T-cell (primary cell): ENCODE measurements at regions of chr19 and their contacts with region 1.

Region 1: GRCh38 chr19:7943444-7944176 is at the start of gene TIMM44:
- DNase-seq: peak; percentile 92 to 99 (median 98)
- ATAC-seq: peak; percentile 95 to 98 (median 98)
- H3K4me3 ChIP-seq: peak within 1 kb of the TSS; percentile 90 to 92
- H3K4me3 Mint-ChIP-seq: peak within 1 kb of the TSS; percentile 87 to 90 (median 89)
- H3K27ac ChIP-seq: peak within 1 kb of the TSS; percentile 97
- H3K27ac Mint-ChIP-seq: peak within 1 kb of the TSS; percentile 90 to 95
- H3K4me1 ChIP-seq: peaks cover 7 to 32% of the 10 kb centered on the region in 2 experiments
- H3K4me1 Mint-ChIP-seq: peaks cover 32 to 46% (median 35%) of the 10 kb centered on the region in 3 donors
- H3K27me3 ChIP-seq: no peaks in the 10 kb centered on the region
- H3K27me3 Mint-ChIP-seq: no peaks in the 10 kb centered on the region
- total RNA-seq, gene TIMM44: 72.7 to 99.4 (median 90.3) TPM

Region 2: DNA sequence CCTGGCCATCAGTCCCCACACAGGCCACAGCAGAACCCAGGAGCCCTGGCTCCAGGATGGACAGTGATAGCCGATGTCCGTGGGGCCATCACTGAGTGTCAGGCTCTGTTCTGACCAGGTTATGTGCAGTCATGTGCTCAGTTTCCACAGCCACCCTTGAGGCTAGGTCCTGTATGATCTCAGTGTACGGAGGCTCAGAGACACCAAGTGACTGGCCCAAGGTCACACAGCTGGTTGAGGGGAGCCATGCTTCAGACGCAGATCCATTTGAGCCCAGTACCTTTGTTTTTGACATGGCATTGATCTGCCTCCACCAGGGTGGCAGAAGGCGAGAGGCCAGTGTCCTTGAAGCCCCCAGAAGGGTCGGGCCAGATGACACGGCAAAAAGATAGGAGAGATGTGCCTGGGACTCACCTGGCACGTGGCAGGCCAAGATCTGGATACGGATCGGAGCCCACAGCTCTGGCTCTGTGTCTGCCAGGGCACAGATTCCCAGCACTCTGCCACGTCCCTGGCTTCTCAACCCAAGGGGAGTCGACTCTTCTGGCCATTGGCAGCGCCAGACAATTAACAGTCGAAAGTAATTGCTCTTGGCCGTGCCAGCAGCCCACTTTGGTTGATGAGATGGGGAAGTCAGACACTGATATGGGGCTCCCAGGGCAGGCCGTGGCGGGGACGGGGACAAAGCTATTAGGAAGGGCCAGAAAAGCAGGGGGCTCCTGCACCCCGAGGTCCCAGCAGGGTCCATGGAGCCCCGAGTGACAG is 98.0 kb before region 1 on chr19:
- CTCF ChIA-PET with region 1: no interaction called
- POLR2A ChIA-PET with region 1: no interaction called
- DNase-seq: no peak
- ATAC-seq: no peak
- H3K4me3 ChIP-seq: no peak overlapping the region
- H3K4me3 Mint-ChIP-seq: no peak overlapping the region
- H3K27ac ChIP-seq: no peak overlapping the region
- H3K27ac Mint-ChIP-seq: no peak overlapping the region
- H3K4me1 ChIP-seq: no peaks in the 10 kb centered on the region
- H3K4me1 Mint-ChIP-seq: no peaks in the 10 kb centered on the region
- H3K27me3 ChIP-seq: no peaks in the 10 kb centered on the region
- H3K27me3 Mint-ChIP-seq: no peaks in the 10 kb centered on the region

Region 3: GRCh38 chr19:7868676-7869452 is 74.7 kb before region 1 on chr19:
- CTCF ChIA-PET with region 1: interaction called in 1 of 2 experiments, 18 read pairs
- POLR2A ChIA-PET with region 1: no interaction called
- DNase-seq: peak; percentile 70 to 96 (median 82)
- ATAC-seq: peak; percentile 74 to 85 (median 83)
- H3K4me3 ChIP-seq: peak overlapping the region; percentile 58 to 59
- H3K4me3 Mint-ChIP-seq: peak overlapping the region; percentile 75 to 80 (median 76)
- H3K27ac ChIP-seq: peak overlapping the region; percentile 76
- H3K27ac Mint-ChIP-seq: peak overlapping the region; percentile 23 to 88
- H3K4me1 ChIP-seq: peaks cover 3 to 65% of the 10 kb centered on the region in 2 experiments
- H3K4me1 Mint-ChIP-seq: peaks cover 35 to 48% (median 37%) of the 10 kb centered on the region in 3 donors
- H3K27me3 ChIP-seq: peaks cover 0 to 75% of the 10 kb centered on the region in 2 experiments
- H3K27me3 Mint-ChIP-seq: peaks cover 17 to 24% of the 10 kb centered on the region in 2 donors

Region 4: GRCh38 chr19:7919610-7920518 is 23.7 kb before region 1 on chr19 and contains the start of gene SNAPC2:
- CTCF ChIA-PET with region 1: interaction called, 3 to 33 read pairs
- POLR2A ChIA-PET with region 1: interaction called in 1 of 2 experiments, 12 read pairs
- DNase-seq: peak; percentile 91 to 98 (median 96)
- ATAC-seq: peak; percentile 69 to 71 (median 70)
- H3K4me3 ChIP-seq: peak within 1 kb of the TSS; percentile 57
- H3K4me3 Mint-ChIP-seq: peak within 1 kb of the TSS; percentile 86 to 94 (median 88)
- H3K27ac ChIP-seq: peak within 1 kb of the TSS; percentile 72
- H3K27ac Mint-ChIP-seq: peak within 1 kb of the TSS; percentile 91 to 94
- H3K4me1 ChIP-seq: peaks cover 17 to 68% of the 10 kb centered on the region in 2 experiments
- H3K4me1 Mint-ChIP-seq: peaks cover 29 to 53% (median 35%) of the 10 kb centered on the region in 3 donors
- H3K27me3 ChIP-seq: peaks cover 3 to 45% of the 10 kb centered on the region in 2 experiments
- H3K27me3 Mint-ChIP-seq: peaks cover 10 to 31% of the 10 kb centered on the region in 2 donors
- total RNA-seq, gene SNAPC2: 9.0 to 22.9 (median 18.6) TPM

Region 5: GRCh38 chr19:7928736-7929701 is 14.6 kb before region 1 on chr19:
- CTCF ChIA-PET with region 1: interaction called, 3 to 15 read pairs
- POLR2A ChIA-PET with region 1: interaction called in 1 of 2 experiments, 12 read pairs
- DNase-seq: peak in 34 of 35 experiments; percentile 43 to 89 (median 78)
- ATAC-seq: peak; percentile 23 to 60 (median 37)
- H3K4me3 ChIP-seq: no peak overlapping the region
- H3K4me3 Mint-ChIP-seq: peak overlapping the region in 1 of 3 donors; percentile 38
- H3K27ac ChIP-seq: no peak overlapping the region
- H3K27ac Mint-ChIP-seq: peak overlapping the region in 1 of 2 donors; percentile 15
- H3K4me1 ChIP-seq: peaks cover 2 to 21% of the 10 kb centered on the region in 2 experiments
- H3K4me1 Mint-ChIP-seq: peaks cover 0 to 19% (median 12%) of the 10 kb centered on the region in 3 donors
- H3K27me3 ChIP-seq: no peaks in the 10 kb centered on the region
- H3K27me3 Mint-ChIP-seq: no peaks in the 10 kb centered on the region